Lower lobe of right lung (tissue), 2 donors: ENCODE measurements at regions of chr5 and their contacts with region 1.

Region 1: GRCh38 chr5:174945853-174946252 is 221.5 kb downstream of the MSX2 start:
- DNase-seq: no peak
- ATAC-seq: no peak
- H3K4me3 ChIP-seq: no peak overlapping the region
- H3K27ac ChIP-seq: no peak overlapping the region
- H3K4me1 ChIP-seq: no peaks in the 10 kb centered on the region
- H3K27me3 ChIP-seq: no peaks in the 10 kb centered on the region
- CTCF ChIP-seq: no peak

Region 2: GRCh38 chr5:175457466-175457865 is 511.6 kb after region 1 on chr5:
- intact Hi-C with region 1: loop called (anchors 10 kb)
- DNase-seq: no peak
- ATAC-seq: no peak
- H3K4me3 ChIP-seq: no peak overlapping the region
- H3K27ac ChIP-seq: no peak overlapping the region
- H3K4me1 ChIP-seq: no peaks in the 10 kb centered on the region
- H3K27me3 ChIP-seq: peaks cover 4% of the 10 kb centered on the region
- CTCF ChIP-seq: no peak